ENCODE measurements at regions of chr3 and their contacts with region 1.

Region 1: GRCh38 chr3:47482366-47482765 is 6.6 kb upstream of the SCAP start:
- DNase-seq: no peak
- H3K4me3 ChIP-seq: peak overlapping the region in 3 of 4 experiments; percentile 1 to 44 (median 26); a peak in 4 of 8 replicates
- H3K27ac ChIP-seq: peak overlapping the region; percentile 49; the same call in 1 of the 2 replicates
- H3K4me1 ChIP-seq: peaks cover 2 to 12% (median 6%) of the 10 kb centered on the region in 4 experiments; a peak in 4 of 7 replicates
- H3K27me3 ChIP-seq: no peaks in the 10 kb centered on the region
- CTCF ChIP-seq: no peak
- EP300 ChIP-seq: no peak
- POLR2A ChIP-seq: no peak
- RAD21 ChIP-seq: no peak

Region 2: DNA sequence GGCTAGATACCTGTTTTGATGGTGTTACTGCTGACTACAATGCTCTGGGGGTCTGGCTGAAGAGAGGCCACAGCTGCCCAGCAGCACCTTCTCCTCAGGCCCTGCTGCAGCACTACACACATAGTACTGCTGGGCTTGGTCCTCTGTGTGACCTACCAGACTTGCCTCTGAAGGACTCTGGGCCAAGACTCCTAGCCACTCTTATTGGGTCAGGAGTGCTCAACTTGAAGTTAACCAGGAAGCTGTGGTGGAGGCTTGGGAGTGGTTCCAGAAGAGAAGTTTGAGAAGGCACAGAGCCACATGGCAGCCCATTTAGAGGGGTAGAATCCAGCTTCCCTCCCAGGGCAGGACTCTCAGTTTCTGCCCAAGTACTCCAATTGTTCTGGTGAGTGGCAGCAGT is 14.5 kb after region 1 on chr3:
- CTCF ChIA-PET with region 1: interaction called, 5 read pairs
- POLR2A ChIA-PET with region 1: interaction called, 23 read pairs
- DNase-seq: no peak
- H3K4me3 ChIP-seq: no peak overlapping the region
- H3K27ac ChIP-seq: no peak overlapping the region
- H3K4me1 ChIP-seq: no peaks in the 10 kb centered on the region
- H3K27me3 ChIP-seq: no peaks in the 10 kb centered on the region
- CTCF ChIP-seq: no peak
- EP300 ChIP-seq: no peak
- POLR2A ChIP-seq: no peak
- RAD21 ChIP-seq: no peak

Region 3: DNA sequence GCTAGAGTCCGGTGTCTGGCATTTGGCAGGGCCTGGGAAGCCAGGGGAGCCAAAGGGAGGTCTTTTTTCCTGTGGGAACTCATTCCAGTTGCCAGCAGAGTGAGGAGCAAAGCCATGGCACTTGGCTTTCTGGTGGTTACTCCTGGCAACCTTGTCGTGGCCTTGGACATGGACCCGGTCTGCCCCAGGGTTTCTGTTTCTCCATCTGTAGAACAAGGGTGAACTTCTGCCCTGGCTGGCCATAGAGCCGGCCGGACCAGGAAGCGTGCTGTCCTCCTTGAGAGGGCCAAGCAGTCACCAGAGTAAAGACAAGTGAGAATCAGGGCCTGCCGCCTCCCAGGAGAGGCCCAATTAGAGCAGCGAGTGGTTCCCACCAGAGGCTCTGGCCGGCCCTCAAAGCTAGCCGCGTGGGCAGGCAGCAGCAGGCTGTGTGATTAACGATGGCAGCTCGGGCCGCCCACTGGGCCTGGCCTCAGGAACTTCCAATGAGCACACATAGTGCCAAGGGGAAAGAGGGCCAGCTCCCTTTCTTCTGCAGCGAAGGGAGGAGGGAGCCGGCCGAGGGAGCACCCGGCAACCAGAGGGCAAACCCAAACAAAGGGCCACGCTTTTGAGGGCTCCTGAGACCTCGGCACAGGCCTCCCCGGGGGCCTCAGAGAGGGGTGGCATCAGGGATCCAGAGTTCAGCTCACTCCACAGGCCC is 60.3 kb after region 1 on chr3:
- CTCF ChIA-PET with region 1: no interaction called
- POLR2A ChIA-PET with region 1: no interaction called
- DNase-seq: no peak
- H3K4me3 ChIP-seq: no peak overlapping the region
- H3K27ac ChIP-seq: no peak overlapping the region
- H3K4me1 ChIP-seq: no peaks in the 10 kb centered on the region
- H3K27me3 ChIP-seq: no peaks in the 10 kb centered on the region; a peak in 1 of 7 replicates
- CTCF ChIP-seq: no peak
- EP300 ChIP-seq: no peak
- POLR2A ChIP-seq: no peak
- RAD21 ChIP-seq: no peak